ENCODE measurements at regions of chr6 and their contacts with region 1.

Region 1: DNA sequence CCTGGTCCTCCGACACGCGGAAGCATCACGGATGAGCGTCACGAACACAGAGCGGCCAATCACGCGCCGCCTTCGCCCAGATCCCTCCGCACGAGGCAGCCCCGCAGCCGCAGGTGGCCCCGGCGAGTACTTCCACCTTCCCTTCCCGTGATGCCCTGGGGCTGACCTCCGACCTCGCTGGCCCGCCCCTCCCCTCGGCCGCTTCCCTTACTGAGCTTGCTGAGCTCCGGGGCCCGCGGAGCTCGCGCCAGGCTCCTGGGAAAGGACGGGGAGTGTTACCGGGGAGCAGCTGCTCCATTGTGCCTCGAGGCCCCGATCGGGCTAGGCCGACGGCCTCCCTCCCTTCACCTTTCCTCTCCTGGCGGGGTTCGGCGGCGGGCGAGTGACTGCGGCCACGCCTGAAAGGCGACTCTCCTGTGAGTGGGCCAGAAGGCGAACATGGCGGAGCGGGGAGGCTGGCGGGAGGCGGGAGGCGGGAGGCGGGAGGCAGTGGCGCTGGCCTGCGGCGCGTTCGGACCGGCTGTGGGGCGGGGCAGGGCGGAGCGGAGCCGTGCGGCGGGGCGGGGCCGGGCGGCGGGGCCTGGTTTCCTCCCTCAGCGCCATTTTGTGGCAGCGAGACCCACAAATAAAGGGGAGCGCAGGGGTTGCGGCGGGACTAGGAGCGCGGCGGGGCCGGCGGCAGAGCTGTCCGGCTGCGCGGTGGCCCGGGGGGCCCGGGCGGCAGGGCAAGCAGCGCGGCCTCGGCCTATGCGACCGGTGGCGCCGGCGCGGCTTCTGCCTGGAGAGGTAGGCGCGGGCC is at the start of gene WTAP:
- DNase-seq: peak; percentile 95
- ATAC-seq: peak; percentile 89
- H3K4me3 ChIP-seq: peak within 1 kb of the TSS; percentile 88 to 99 (median 97)
- H3K27ac ChIP-seq: peak within 1 kb of the TSS; percentile 99
- H3K4me1 ChIP-seq: peaks cover 61% of the 10 kb centered on the region
- H3K27me3 ChIP-seq: no peaks in the 10 kb centered on the region; a peak in 1 of 5 replicates
- CTCF ChIP-seq: peak; percentile 40
- EP300 ChIP-seq: peak; percentile 5 to 64; a peak in 2 of 4 replicates
- POLR2A ChIP-seq: peak; percentile 86 to 97
- RAD21 ChIP-seq: peak; percentile 62
- total RNA-seq, gene WTAP: 167 and 203 TPM in 2 replicates

Region 2: GRCh38 chr6:159616456-159616855 is 110.7 kb before region 1 on chr6:
- CTCF ChIA-PET with region 1: no interaction called
- POLR2A ChIA-PET with region 1: no interaction called
- in situ Hi-C with region 1: no loop called
- intact Hi-C with region 1: no loop called
- DNase-seq: no peak
- ATAC-seq: no peak
- H3K4me3 ChIP-seq: no peak overlapping the region
- H3K27ac ChIP-seq: no peak overlapping the region
- H3K4me1 ChIP-seq: no peaks in the 10 kb centered on the region
- H3K27me3 ChIP-seq: peaks cover 0 to 8% of the 10 kb centered on the region in 2 experiments; a peak in 1 of 5 replicates
- CTCF ChIP-seq: no peak
- EP300 ChIP-seq: no peak
- POLR2A ChIP-seq: no peak
- RAD21 ChIP-seq: no peak

Region 3: GRCh38 chr6:159806021-159806458 is 78.9 kb after region 1 on chr6:
- CTCF ChIA-PET with region 1: no interaction called
- POLR2A ChIA-PET with region 1: interaction called, 23 read pairs
- in situ Hi-C with region 1: no loop called
- intact Hi-C with region 1: no loop called
- DNase-seq: peak; percentile 75
- ATAC-seq: peak; percentile 72
- H3K4me3 ChIP-seq: 0 out of 6 replicates have a peak overlapping the region, but pooled peaks of 1 of the 3 experiments have one; percentile 17
- H3K27ac ChIP-seq: no peak overlapping the region
- H3K4me1 ChIP-seq: peaks cover 32% of the 10 kb centered on the region
- H3K27me3 ChIP-seq: 0 out of 5 replicates have a peak, but pooled peaks cover 0 to 4% of the 10 kb centered on the region in 2 experiments
- CTCF ChIP-seq: no peak
- EP300 ChIP-seq: peak in 1 of 2 experiments; percentile 58; a peak in 1 of 4 replicates
- POLR2A ChIP-seq: no peak
- RAD21 ChIP-seq: no peak

Measured in HepG2 (cell line).